ENCODE measurements at regions of chr1 and their contacts with region 1.

Region 1: DNA sequence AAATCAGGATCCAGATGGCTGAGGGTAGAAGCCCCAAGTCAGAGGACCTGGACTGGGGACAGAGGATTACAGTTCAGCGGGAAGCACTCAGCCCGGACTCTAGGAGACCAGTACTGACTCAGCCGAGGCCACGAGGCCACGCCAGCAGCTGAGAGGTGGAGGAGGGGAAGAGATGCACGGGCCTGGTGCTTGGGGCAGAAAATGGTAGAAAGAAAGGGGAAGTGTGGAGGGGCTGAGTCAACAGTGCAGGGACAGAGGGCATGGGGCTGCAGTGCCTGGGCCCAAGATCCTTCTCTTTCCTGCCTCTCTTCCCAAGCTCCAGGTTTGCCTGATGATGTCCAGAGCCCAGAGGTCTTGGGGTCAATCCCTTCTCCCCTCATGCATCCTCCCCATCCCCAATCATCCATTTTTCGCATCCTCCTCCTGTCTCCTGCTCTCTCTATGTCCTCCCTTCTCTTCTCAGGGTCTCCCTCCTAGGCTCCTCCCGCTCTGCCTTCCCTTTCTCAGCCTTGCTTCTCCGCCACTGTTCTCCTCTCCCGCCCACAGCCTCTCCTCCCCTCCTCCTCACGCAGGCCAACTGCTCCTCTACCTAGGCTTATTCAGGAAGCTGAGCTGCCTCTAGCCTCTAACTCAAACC is 7.7 kb downstream of the ARHGEF2 start:
- DNase-seq: no peak
- H3K4me3 ChIP-seq: no peak overlapping the region
- H3K27ac ChIP-seq: no peak overlapping the region
- H3K4me1 ChIP-seq: peaks cover 9 to 43% (median 30%) of the 10 kb centered on the region in 4 experiments
- H3K27me3 ChIP-seq: no peaks in the 10 kb centered on the region
- CTCF ChIP-seq: no peak
- EP300 ChIP-seq: no peak
- POLR2A ChIP-seq: no peak
- RAD21 ChIP-seq: no peak

Region 2: DNA sequence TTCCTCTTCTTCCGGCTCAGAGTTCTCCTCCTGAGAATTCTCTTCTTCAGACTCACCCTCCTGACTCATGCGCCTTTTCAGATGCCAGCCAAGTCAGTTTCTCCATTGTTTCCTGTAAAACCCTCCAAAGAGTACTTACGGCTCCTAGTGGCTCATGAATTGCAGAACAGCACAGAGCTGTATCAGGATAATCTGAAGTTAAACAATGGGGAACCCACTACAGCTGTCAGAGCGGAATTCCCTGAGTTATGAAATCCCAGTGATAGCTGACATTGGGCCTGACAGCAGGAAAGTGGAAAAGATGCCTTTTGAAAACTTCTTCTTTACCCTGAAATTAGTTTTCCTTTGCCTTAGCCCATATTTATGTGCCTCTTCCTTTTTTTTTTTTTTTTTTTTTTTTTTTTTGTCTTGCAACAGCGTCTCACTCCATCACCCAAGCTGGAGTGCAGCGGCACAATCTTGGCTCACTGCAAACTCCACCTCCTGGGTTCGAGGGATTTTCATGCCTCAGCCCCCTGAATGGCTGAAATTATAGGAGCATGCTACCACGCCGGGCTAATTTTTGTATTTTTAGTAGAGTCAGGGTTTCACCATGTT is 322.0 kb before region 1 on chr1:
- CTCF ChIA-PET with region 1: no interaction called
- POLR2A ChIA-PET with region 1: no interaction called
- DNase-seq: peak in 1 of 2 experiments; percentile 15
- H3K4me3 ChIP-seq: no peak overlapping the region
- H3K27ac ChIP-seq: no peak overlapping the region
- H3K4me1 ChIP-seq: no peaks in the 10 kb centered on the region
- H3K27me3 ChIP-seq: no peaks in the 10 kb centered on the region
- CTCF ChIP-seq: peak in 2 of 3 experiments; percentile 33; a peak in 2 of 4 replicates
- EP300 ChIP-seq: no peak
- POLR2A ChIP-seq: no peak
- RAD21 ChIP-seq: peak; percentile 60 to 63

Region 3: DNA sequence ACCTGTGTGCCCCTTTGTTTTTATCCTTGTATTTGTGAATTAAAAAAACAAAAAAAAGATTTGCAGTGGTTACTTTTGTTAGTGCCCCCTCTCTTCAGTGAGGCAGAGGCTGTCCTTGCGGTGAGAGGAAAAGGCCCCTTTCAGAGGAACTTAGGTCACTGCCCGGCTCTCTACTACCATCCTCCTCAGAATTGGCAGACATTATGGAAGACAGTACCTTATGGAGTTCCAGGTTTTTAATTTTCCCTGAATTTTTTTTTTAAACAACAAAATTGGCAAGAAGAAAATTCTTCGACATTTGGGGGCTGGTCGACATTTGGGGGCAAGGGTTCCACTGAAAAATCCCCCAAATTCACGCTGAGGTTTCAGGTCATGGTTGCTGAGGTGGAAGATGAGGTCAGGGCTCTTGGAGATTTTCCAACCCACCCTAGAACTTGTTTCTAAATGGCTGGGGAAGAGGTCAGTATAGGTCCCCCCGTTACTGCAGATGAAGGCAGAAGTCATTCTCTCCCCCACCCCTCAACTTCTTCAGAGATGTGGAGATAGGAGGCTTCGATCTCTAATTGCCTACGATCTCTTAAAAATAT is 23.9 kb before region 1 on chr1:
- CTCF ChIA-PET with region 1: interaction called, 8 read pairs
- POLR2A ChIA-PET with region 1: interaction called, 39 read pairs
- DNase-seq: no peak
- H3K4me3 ChIP-seq: no peak overlapping the region
- H3K27ac ChIP-seq: no peak overlapping the region
- H3K4me1 ChIP-seq: peaks cover 0 to 8% (median 4%) of the 10 kb centered on the region in 4 experiments; a peak in 4 of 7 replicates
- H3K27me3 ChIP-seq: no peaks in the 10 kb centered on the region
- CTCF ChIP-seq: no peak
- EP300 ChIP-seq: no peak
- POLR2A ChIP-seq: no peak
- RAD21 ChIP-seq: no peak

Region 4: DNA sequence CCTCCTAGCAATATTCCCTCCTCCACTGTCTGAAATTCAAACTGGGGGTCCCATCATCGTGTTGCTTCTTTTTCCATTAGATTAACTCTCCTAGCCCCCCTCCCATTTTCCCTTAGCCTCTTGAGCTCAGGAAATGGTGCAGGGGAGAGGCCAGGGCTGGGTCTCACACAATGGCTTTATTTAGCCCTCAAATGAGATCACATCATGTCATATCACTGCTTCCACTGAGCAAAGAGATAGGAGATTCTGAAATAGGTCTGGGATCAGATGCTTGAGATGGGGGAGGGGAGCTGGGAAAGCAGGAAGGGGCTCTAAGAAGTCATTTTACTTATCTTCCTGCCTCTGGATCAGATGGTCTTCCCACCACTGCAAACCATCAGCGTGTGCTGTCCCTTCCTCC is 25.5 kb after region 1 on chr1:
- CTCF ChIA-PET with region 1: interaction called, 126 read pairs
- POLR2A ChIA-PET with region 1: interaction called, 282 read pairs
- DNase-seq: no peak
- H3K4me3 ChIP-seq: no peak overlapping the region
- H3K27ac ChIP-seq: no peak overlapping the region
- H3K4me1 ChIP-seq: no peaks in the 10 kb centered on the region
- H3K27me3 ChIP-seq: no peaks in the 10 kb centered on the region
- CTCF ChIP-seq: no peak
- EP300 ChIP-seq: no peak
- POLR2A ChIP-seq: no peak
- RAD21 ChIP-seq: no peak

Region 5: GRCh38 chr1:156114101-156114916 is 143.7 kb after region 1 on chr1 and contains the start of gene LMNA:
- CTCF ChIA-PET with region 1: no interaction called
- POLR2A ChIA-PET with region 1: no interaction called
- DNase-seq: peak in 1 of 2 experiments; percentile 86
- H3K4me3 ChIP-seq: peak within 1 kb of the TSS; percentile 69 to 83 (median 78)
- H3K27ac ChIP-seq: peak within 1 kb of the TSS; percentile 59; the same call in 1 of the 2 replicates
- H3K4me1 ChIP-seq: peaks cover 0 to 15% (median 14%) of the 10 kb centered on the region in 4 experiments; a peak in 6 of 7 replicates
- H3K27me3 ChIP-seq: peaks cover 0 to 2% (median 0%) of the 10 kb centered on the region in 4 experiments; a peak in 1 of 7 replicates
- CTCF ChIP-seq: no peak
- EP300 ChIP-seq: no peak
- POLR2A ChIP-seq: peak; percentile 70 to 78
- RAD21 ChIP-seq: no peak
- total RNA-seq, gene LMNA: 46.8 and 48.0 TPM in 2 replicates

Measured in H1 (cell line).